Breast epithelium (tissue), 4 donors: ENCODE measurements at regions of chr3 and their contacts with region 1.

Region 1: DNA sequence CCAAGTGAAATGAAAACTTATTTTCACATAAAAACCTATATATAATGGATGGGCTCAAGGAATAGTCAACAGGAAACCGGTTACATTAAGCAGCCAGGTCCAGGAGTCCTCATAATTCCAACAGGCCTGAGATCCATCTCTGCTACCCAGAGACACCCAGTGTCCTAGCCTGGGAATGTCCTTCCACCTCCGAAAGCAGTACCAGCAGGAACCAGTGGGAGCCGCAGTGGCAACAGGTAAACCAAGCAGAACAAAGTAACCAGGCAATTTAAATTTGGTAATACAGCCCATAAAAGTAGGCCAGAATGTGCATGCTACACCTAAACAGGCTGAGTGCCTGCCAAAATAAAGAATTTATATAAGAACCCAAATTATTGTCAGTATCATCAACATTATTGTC is 195.6 kb downstream of the ZBBX start:
- DNase-seq: no peak
- H3K4me3 ChIP-seq: no peak overlapping the region
- H3K27ac ChIP-seq: no peak overlapping the region
- H3K4me1 ChIP-seq: no peaks in the 10 kb centered on the region
- H3K27me3 ChIP-seq: no peaks in the 10 kb centered on the region
- CTCF ChIP-seq: no peak
- POLR2A ChIP-seq: no peak

Region 2: DNA sequence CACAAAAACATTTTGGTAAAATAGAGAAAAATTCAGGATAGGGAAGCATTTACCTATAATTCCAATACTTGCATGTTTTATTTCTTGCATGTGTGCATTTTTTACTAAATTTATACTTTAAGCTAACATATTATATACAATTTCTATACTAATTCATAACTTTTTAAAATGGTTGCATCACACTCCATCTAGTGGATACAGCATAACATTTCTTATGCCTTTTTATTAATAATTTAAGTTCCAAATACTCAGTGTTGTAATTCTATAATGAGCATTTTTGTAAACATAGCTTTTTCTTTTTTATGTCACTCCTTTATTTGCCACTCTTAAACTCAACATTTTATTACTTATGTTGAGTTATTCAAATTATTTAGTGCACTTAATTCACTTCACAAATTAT is 282.1 kb before region 1 on chr3:
- intact Hi-C with region 1: loop called (anchors 5 kb)
- DNase-seq: no peak
- H3K4me3 ChIP-seq: no peak overlapping the region
- H3K27ac ChIP-seq: no peak overlapping the region
- H3K4me1 ChIP-seq: no peaks in the 10 kb centered on the region
- H3K27me3 ChIP-seq: no peaks in the 10 kb centered on the region
- CTCF ChIP-seq: no peak
- POLR2A ChIP-seq: no peak